ENCODE measurements at regions of chr7 and their contacts with region 1.

Region 1: DNA sequence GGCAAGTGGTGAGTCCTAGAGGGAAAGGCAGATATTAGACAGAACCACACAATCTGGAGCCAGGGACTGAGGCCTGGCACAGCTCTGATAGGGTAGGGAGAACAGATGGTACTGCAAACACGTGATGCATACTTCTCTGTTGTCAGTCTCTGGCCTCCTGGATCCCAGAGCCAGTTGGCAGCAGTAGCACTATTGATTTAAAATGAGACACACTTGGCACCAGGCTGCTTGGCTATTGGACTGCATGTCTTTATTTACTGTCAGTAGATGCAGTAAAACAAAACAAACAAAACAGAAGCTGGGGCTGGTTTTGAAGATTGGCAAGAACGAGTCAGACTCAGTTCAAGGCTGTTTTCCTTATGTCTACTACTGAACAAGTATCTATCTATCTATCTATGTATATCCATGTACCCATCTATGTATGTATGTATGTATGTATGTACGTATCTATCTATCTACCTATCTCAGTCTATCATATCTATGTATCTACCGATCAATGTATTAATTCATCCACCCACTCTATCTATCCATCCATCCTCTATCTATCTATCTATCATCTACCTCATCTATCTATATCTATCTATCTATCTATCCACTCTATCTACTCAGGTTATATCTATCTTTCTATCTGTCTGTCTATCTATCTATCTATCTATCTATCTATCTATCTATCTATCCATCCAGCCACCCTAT is 23.4 kb upstream of the MGAM2 start:
- DNase-seq: peak in 5 of 10 donors; percentile 13 to 84 (median 38)

Region 2: GRCh38 chr7:141837683-141838082 is 250.5 kb before region 1 on chr7:
- intact Hi-C with region 1: no loop called
- DNase-seq: no peak

Region 3: DNA sequence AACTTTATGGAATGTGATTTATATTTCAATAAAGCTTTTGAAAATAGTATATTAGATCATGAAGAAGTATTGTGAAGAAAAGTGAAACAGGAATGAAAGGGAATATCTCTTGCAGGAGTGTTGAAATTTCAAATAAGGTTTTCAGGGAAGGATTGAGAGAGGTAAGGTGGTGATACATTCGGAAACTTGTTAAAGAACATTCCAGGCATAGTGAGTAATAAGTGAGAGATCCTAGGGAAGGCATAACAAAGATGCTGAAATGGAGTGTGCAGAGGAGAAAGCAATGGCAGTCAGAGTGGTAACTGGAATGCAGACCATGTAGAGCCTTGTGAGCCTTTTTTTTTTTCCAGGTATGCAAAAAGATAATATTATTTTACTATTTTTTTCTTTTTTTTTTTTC is 167.9 kb before region 1 on chr7:
- intact Hi-C with region 1: no loop called
- DNase-seq: no peak

Region 4: GRCh38 chr7:141975806-141976523 is 112.2 kb before region 1 on chr7:
- intact Hi-C with region 1: loop called (anchors 10 kb)
- DNase-seq: peak; percentile 29 to 95 (median 78)

Region 5: DNA sequence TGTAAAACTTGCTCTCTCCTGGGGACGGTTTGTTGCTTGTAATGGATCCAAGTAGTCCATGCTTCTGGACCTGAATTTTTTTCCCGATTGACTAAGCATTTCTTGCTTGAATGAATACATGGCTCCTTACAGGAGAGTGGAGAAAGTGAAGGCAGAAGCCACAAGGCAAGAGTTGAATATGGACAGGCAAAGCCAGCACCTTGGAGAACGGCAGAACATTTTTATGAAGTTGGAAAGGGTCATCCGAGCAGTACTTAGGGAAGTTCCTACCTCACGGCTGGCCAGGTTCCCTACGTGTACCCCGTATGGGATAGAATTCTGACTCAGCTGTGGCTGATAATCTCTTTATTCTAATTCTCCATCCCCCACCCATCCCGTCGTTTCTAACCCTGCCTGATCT is 27.2 kb before region 1 on chr7:
- intact Hi-C with region 1: loop called (anchors 1 kb)
- DNase-seq: no peak

Measured in posterior cingulate gyrus (tissue), 11 donors.